ENCODE measurements at regions of chr5 and their contacts with region 1.

Region 1: GRCh38 chr5:61331407-61332357 is at the start of gene ZSWIM6:
- DNase-seq: peak; percentile 100
- ATAC-seq: peak; percentile 90
- H3K4me3 Mint-ChIP-seq: peak within 1 kb of the TSS; percentile 81
- H3K27ac Mint-ChIP-seq: peak within 1 kb of the TSS; percentile 91
- H3K4me1 Mint-ChIP-seq: peaks cover 46% of the 10 kb centered on the region
- H3K27me3 Mint-ChIP-seq: peaks cover 12% of the 10 kb centered on the region
- CTCF ChIP-seq: no peak
- total RNA-seq, gene ZSWIM6: 4.4 TPM

Region 2: GRCh38 chr5:61277190-61277589 is 54.5 kb before region 1 on chr5:
- CTCF ChIA-PET with region 1: interaction called, 4 read pairs
- POLR2A ChIA-PET with region 1: interaction called, 5 read pairs
- intact Hi-C with region 1: loop called (anchors 5 kb)
- DNase-seq: peak; percentile 34
- ATAC-seq: peak; percentile 45
- H3K4me3 Mint-ChIP-seq: peak overlapping the region; percentile 12
- H3K27ac Mint-ChIP-seq: peak overlapping the region; percentile 72
- H3K4me1 Mint-ChIP-seq: peaks cover 34% of the 10 kb centered on the region
- H3K27me3 Mint-ChIP-seq: no peaks in the 10 kb centered on the region
- CTCF ChIP-seq: no peak

Region 3: DNA sequence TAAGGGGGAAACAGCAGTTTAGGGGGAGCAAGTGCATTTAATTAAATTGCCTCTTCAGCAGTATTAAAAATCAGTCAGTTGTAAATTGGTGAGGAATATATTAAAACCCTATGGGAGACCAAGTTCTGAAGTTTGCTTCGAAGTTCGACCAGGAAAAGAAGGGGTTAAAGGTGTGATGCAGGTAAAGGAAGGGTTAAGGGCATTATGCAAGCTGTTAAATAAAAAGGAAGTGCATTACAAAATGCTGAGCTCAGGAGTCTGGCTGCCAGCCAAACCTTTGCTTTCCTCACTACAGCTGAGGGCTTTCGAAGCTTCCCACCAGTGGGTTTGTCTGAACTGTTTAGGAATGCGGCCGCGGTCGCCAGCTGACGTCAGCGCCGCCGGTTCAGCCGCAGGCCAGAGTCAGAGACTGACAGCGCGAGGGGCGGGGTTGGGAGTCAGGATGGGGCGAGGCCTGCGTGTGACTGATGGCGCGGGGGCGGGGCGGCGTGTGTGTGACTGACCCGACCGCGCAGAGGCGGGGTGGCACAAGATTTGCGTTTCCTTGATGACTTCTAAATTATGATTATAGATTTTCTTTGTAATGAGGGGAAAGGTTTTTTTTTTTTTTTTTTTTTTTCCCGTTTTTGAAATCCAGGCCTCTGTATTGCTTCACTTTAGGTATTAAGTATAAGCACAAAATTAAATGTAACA is 76.9 kb after region 1 on chr5:
- CTCF ChIA-PET with region 1: interaction called, 3 read pairs
- POLR2A ChIA-PET with region 1: no interaction called
- intact Hi-C with region 1: loop called (anchors 5 kb)
- DNase-seq: peak; percentile 98
- ATAC-seq: peak; percentile 100
- H3K4me3 Mint-ChIP-seq: peak overlapping the region; percentile 44
- H3K27ac Mint-ChIP-seq: peak overlapping the region; percentile 54
- H3K4me1 Mint-ChIP-seq: peaks cover 29% of the 10 kb centered on the region
- H3K27me3 Mint-ChIP-seq: no peaks in the 10 kb centered on the region
- CTCF ChIP-seq: no peak

Region 4: DNA sequence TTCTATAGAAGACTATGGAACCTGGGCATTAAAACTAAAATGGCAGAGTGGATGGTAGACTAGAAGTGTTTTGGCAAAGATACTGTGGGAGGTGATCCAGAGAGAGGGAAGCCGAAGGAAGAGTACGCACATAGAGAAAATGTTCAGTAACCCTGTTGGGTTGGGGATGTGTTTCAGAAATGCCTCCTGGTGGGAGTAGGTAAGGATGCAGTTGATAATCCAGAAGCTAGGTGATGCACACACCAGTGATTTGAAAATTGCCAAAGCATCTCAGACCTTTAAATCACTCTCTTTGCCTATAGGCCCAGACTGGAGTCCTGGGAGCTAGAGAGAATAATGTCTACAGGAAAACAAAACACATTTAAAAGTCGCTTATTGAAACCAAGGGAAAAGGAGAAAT is 177.6 kb after region 1 on chr5:
- CTCF ChIA-PET with region 1: no interaction called
- POLR2A ChIA-PET with region 1: no interaction called
- intact Hi-C with region 1: no loop called
- DNase-seq: no peak
- ATAC-seq: no peak
- H3K4me3 Mint-ChIP-seq: no peak overlapping the region
- H3K27ac Mint-ChIP-seq: no peak overlapping the region
- H3K4me1 Mint-ChIP-seq: no peaks in the 10 kb centered on the region
- H3K27me3 Mint-ChIP-seq: no peaks in the 10 kb centered on the region
- CTCF ChIP-seq: no peak

Region 5: DNA sequence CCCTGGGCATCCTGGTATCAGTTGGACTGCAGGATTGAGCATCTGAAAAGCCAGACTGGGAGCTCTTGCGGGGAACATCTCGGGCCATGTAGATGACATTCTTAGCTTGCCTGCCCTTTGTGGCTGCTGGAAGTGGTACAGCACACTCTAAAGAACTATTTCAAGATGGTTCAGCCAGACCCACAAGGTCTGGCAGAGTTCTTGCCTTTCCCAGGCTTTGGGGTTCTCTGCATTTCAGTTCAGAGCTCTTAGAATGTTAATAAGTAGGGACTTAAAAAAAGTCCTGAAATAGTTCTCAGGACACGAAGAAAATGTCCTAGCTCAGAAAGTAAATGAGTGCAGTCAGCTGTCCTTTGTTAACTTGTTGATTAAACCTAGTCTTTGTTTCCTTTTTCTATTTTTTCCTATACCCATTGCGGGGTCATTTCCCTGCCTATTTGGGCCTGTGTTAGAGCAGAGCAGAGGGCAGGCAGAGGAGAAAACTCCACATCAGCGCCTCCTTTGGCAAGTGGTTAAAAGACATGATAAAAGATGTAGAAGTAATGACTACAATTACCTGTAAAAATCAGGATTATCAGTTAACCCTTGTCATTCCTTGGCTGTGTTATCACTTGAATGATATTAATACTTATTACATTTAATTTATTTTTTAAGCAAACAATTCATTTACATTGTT is 291.9 kb after region 1 on chr5:
- CTCF ChIA-PET with region 1: no interaction called
- POLR2A ChIA-PET with region 1: no interaction called
- intact Hi-C with region 1: no loop called
- DNase-seq: peak; percentile 7
- ATAC-seq: no peak
- H3K4me3 Mint-ChIP-seq: no peak overlapping the region
- H3K27ac Mint-ChIP-seq: no peak overlapping the region
- H3K4me1 Mint-ChIP-seq: peaks cover 10% of the 10 kb centered on the region
- H3K27me3 Mint-ChIP-seq: peaks cover 35% of the 10 kb centered on the region
- CTCF ChIP-seq: peak; percentile 20

Measured in activated CD8-positive, alpha-beta T cell treated with anti-CD3 and anti-CD28 coated beads for 36 hours (primary cell).